Psoas muscle (tissue), 8 donors: ENCODE measurements at regions of chr6 and their contacts with region 1.

Region 1: GRCh38 chr6:17666646-17667045 is 40.1 kb downstream of the NUP153 start:
- DNase-seq: no peak
- ATAC-seq: no peak
- H3K4me3 ChIP-seq: no peak overlapping the region
- H3K27ac ChIP-seq: no peak overlapping the region
- H3K4me1 ChIP-seq: no peaks in the 10 kb centered on the region
- H3K27me3 ChIP-seq: no peaks in the 10 kb centered on the region
- CTCF ChIP-seq: no peak

Region 2: DNA sequence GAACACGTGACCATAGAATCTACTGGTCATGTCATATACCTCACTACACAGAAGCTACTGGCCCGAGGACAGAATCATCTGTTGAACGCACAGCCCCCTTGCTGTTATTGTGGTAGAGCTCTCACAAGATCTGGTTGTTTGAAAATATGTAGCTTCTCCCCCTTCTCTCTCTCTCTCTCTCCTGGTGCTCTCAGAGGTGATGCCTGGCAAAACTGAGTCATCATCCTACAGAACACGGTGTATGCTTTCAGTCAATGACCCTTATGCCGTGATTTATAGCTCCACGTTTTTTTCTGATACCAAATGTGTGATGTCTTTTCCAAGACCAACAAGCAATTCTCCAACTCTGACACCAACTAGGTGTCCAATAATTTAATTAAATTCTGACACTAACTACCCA is 398.5 kb before region 1 on chr6:
- intact Hi-C with region 1: no loop called
- DNase-seq: no peak
- ATAC-seq: peak; percentile 29 to 70 (median 54)
- H3K4me3 ChIP-seq: no peak overlapping the region
- H3K27ac ChIP-seq: peak overlapping the region; percentile 83
- H3K4me1 ChIP-seq: peaks cover 31% of the 10 kb centered on the region
- H3K27me3 ChIP-seq: no peaks in the 10 kb centered on the region
- CTCF ChIP-seq: no peak

Region 3: GRCh38 chr6:17511580-17511979 is 155.1 kb before region 1 on chr6:
- intact Hi-C with region 1: no loop called
- DNase-seq: no peak
- ATAC-seq: no peak
- H3K4me3 ChIP-seq: no peak overlapping the region
- H3K27ac ChIP-seq: no peak overlapping the region
- H3K4me1 ChIP-seq: no peaks in the 10 kb centered on the region
- H3K27me3 ChIP-seq: no peaks in the 10 kb centered on the region
- CTCF ChIP-seq: no peak

Region 4: GRCh38 chr6:17610835-17611234 is 55.8 kb before region 1 on chr6:
- intact Hi-C with region 1: no loop called
- DNase-seq: no peak
- ATAC-seq: no peak
- H3K4me3 ChIP-seq: no peak overlapping the region
- H3K27ac ChIP-seq: no peak overlapping the region
- H3K4me1 ChIP-seq: no peaks in the 10 kb centered on the region
- H3K27me3 ChIP-seq: no peaks in the 10 kb centered on the region
- CTCF ChIP-seq: no peak

Region 5: DNA sequence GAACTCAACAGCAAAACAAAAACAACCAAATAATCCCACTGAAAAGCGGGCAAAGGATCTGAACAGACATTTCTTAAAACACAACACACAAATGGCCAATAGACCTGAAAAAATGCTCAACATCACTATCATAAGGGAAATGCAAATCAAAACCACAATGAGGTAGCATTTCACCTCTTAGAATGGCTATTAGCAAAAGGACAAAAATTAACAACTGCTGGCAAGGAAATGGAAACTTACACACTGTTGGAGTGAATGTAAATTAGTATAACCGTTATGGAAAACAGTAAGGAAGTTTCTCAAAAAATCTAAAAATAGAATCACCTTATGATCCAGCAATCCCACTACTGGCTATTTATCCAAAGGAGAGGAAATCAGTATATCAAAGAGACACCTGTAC is 45.6 kb before region 1 on chr6:
- intact Hi-C with region 1: loop called in 1 of 2 experiments (anchors 5 kb)
- DNase-seq: no peak
- ATAC-seq: no peak
- H3K4me3 ChIP-seq: no peak overlapping the region
- H3K27ac ChIP-seq: no peak overlapping the region
- H3K4me1 ChIP-seq: no peaks in the 10 kb centered on the region
- H3K27me3 ChIP-seq: no peaks in the 10 kb centered on the region
- CTCF ChIP-seq: no peak

Region 6: DNA sequence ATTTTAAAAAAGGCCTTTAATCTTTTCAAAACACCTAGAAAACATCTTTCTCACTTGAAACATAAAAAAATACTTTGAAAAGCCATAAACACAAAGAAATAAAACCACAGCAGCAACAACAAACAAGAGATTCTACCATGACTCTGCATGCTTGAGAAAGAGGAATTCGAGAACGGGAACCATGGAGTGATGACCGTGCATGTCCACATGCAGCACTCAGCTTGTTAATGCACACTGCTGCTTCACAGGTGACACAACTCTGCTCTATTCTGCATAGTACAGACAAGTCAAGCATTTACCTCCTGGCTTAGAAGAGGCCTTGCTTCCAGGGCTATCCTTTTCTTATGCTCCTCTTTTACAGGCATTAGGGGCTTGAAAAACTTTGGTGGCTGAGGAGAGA is 105.0 kb after region 1 on chr6:
- intact Hi-C with region 1: loop called in 1 of 2 experiments (anchors 10 kb)
- DNase-seq: no peak
- ATAC-seq: no peak
- H3K4me3 ChIP-seq: no peak overlapping the region
- H3K27ac ChIP-seq: no peak overlapping the region
- H3K4me1 ChIP-seq: no peaks in the 10 kb centered on the region
- H3K27me3 ChIP-seq: no peaks in the 10 kb centered on the region
- CTCF ChIP-seq: no peak